ENCODE measurements at regions of chr4 and their contacts with region 1.

Region 1: DNA sequence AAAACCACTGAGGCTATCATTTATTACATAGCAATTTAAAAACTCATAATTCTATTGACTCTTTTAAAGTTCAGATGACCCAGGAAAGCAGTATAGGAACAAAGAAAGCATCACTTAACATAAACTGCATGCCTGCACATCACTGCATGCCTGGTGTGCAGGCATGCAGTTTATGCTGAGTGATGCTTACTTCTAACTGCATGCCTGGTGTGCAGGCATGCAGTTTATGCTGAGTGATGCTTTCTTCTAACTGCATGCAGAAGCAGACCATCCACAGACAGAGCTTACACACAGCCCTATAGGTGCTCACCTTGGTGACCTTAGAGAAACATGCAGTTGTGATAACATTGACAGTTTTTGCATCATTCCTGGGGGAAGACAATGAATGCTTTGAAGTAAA is 17.0 kb downstream of the SDAD1 start:
- DNase-seq: no peak
- H3K4me3 ChIP-seq: no peak overlapping the region
- H3K27ac ChIP-seq: no peak overlapping the region
- H3K4me1 ChIP-seq: no peaks in the 10 kb centered on the region
- H3K27me3 ChIP-seq: no peaks in the 10 kb centered on the region
- CTCF ChIP-seq: no peak
- POLR2A ChIP-seq: no peak

Region 2: DNA sequence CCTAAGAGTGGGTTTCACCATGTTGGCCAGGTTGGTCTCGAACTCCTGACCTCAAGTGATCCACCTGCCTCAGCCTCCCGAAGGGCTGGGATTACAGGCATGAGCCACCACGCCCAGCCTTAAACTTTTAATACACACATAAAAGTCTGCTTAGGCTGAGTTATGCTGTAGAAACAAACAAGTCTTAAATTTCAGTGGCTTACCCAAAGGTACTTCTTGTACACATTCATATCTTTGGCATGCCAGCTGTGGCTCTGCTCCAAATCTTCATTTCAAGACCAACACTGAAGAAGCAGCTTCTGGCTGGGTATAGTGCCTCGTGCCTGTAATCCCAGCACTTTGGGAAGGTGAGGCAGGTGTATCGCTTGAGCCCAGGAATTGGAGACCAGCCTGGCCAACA is 151.8 kb before region 1 on chr4:
- intact Hi-C with region 1: no loop called
- DNase-seq: no peak
- H3K4me3 ChIP-seq: no peak overlapping the region
- H3K27ac ChIP-seq: no peak overlapping the region
- H3K4me1 ChIP-seq: no peaks in the 10 kb centered on the region
- H3K27me3 ChIP-seq: no peaks in the 10 kb centered on the region
- CTCF ChIP-seq: no peak
- POLR2A ChIP-seq: no peak

Region 3: DNA sequence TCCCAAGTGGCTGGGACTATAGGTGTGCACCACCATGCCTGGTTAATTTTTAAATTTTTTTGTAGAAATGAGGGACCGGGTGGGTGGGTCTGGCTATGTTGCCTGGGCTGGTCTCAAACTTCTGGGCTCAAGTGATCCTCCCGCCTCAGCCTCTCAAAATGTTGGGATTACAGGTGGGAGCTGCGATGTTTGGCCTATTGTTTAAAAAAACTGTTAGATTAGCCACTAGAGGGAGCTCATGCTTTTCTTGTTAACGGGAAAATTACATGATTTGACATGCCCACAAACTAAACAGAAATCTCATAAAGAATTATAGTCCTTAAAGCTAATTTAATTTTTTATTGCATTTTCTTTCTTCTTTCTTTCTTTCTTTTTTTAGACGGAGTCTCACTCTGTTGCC is 22.0 kb after region 1 on chr4:
- intact Hi-C with region 1: loop called (anchors 2 kb)
- DNase-seq: no peak
- H3K4me3 ChIP-seq: no peak overlapping the region
- H3K27ac ChIP-seq: no peak overlapping the region
- H3K4me1 ChIP-seq: no peaks in the 10 kb centered on the region
- H3K27me3 ChIP-seq: no peaks in the 10 kb centered on the region
- CTCF ChIP-seq: peak; percentile 13 to 61 (median 45)
- POLR2A ChIP-seq: no peak

Measured in breast epithelium (tissue), 4 donors.